HCT116 (cell line): ENCODE measurements at regions of chr17 and their contacts with region 1.

Region 1: GRCh38 chr17:8222630-8223356 is 12.4 kb upstream of the AURKB start:
- DNase-seq: peak; percentile 87
- ATAC-seq: peak; percentile 47
- H3K4me3 ChIP-seq: peak overlapping the region; percentile 82 to 86
- H3K27ac ChIP-seq: peak overlapping the region; percentile 83
- H3K4me1 ChIP-seq: peaks cover 51 to 94% of the 10 kb centered on the region in 2 experiments
- H3K27me3 ChIP-seq: no peaks in the 10 kb centered on the region
- CTCF ChIP-seq: no peak
- POLR2A ChIP-seq: peak; percentile 44
- RAD21 ChIP-seq: no peak

Region 2: DNA sequence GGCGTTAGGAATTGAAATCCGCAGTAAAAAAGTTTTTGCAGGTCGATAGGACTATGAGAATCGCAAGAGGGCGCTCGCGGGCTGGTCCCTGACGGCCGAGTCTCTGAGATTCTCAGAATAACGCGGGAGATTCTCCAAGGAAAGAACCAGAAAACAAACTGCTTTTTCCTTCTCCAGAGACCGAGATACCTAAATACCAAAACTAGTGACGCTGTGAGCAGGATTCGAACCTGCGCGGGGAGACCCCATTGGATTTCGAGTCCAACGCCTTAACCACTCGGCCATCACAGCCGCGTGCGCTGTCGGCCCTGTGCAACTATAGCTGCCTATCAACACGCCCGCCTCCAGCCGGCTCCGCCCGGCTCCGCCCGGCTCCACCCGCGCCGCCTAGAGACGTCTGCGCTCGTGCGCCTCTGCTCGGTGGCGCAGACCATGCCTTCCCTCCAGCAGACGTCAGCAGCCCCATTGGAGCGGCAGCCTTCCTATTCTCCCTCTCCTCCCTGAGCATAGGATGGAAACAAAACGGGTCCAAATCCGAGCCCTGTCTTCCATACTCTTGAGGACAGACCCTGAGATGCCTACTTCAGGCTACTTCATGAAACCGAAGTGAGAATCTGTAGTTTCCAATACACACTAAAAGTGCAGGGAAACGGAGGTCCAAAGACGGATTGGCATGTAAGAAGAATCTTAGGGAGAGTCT is 84.0 kb before region 1 on chr17:
- CTCF ChIA-PET with region 1: no interaction called
- POLR2A ChIA-PET with region 1: interaction called, 3 read pairs
- RAD21 ChIA-PET with region 1: interaction called in 1 of 2 experiments, 4 read pairs
- intact Hi-C with region 1: loop called (anchors 5 kb)
- DNase-seq: peak; percentile 95
- ATAC-seq: peak; percentile 89
- H3K4me3 ChIP-seq: peak overlapping the region; percentile 14 to 48; a peak in 3 of 4 replicates
- H3K27ac ChIP-seq: peak overlapping the region; percentile 63
- H3K4me1 ChIP-seq: peaks cover 30 to 61% of the 10 kb centered on the region in 2 experiments
- H3K27me3 ChIP-seq: no peaks in the 10 kb centered on the region
- CTCF ChIP-seq: peak; percentile 86 to 87 (median 87)
- POLR2A ChIP-seq: no peak
- RAD21 ChIP-seq: peak; percentile 88

Region 3: GRCh38 chr17:8189711-8190477 is 32.9 kb before region 1 on chr17 and contains the start of gene BORCS6:
- CTCF ChIA-PET with region 1: interaction called, 4 read pairs
- POLR2A ChIA-PET with region 1: interaction called, 63 read pairs
- RAD21 ChIA-PET with region 1: interaction called, 3 to 9 read pairs
- intact Hi-C with region 1: loop called (anchors 1 kb)
- DNase-seq: peak; percentile 96
- ATAC-seq: peak; percentile 64
- H3K4me3 ChIP-seq: peak within 1 kb of the TSS; percentile 75 to 83
- H3K27ac ChIP-seq: peak within 1 kb of the TSS; percentile 89
- H3K4me1 ChIP-seq: peaks cover 32 to 64% of the 10 kb centered on the region in 2 experiments
- H3K27me3 ChIP-seq: no peaks in the 10 kb centered on the region
- CTCF ChIP-seq: no peak
- POLR2A ChIP-seq: no peak
- RAD21 ChIP-seq: no peak
- total RNA-seq, gene BORCS6: 6.4 TPM

Region 4: DNA sequence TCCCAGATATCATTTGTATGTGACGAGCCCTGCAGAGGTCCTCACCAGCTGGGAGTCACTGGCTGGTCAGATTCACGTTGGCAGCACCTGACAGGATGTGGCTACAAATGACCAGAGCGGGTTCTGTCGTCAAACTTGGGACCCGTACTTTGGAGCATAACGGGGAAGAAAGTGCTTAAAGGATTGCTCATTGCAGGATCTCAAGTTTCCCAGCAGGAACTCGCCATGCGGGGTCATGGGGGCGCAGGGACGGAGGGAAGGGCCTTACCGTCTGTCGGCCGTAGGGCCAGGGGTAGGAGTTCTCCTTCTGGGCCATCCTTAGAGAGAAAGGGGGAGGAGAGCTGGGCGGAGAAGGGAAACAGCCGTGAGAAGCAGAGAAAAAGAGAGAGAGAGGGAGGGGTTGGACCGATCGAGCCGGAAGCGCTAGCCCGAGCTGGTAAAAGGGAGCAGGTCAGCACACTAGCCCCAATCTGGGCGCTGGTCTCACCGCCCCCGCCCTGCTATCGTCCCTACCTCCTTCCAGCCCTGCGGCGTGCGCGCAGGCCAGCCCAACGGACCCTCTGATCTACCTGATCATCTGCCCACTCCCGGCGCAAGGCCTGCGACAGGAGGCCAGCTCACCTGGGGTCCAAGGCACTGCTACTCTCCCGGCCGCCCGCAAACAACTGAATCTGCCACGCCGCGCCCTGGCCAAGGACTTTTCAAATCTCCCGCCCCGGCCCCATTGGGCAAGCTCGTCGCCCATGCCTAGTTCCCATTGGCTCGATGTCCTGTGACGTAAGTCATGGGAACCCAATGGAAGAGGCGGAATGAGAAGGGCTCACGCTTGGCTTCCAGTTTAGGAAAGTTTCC is 12.7 kb before region 1 on chr17 and contains the start of gene AURKB:
- CTCF ChIA-PET with region 1: no interaction called
- POLR2A ChIA-PET with region 1: interaction called, 57 read pairs
- RAD21 ChIA-PET with region 1: no interaction called
- intact Hi-C with region 1: no loop called
- DNase-seq: peak; percentile 92
- ATAC-seq: peak; percentile 77
- H3K4me3 ChIP-seq: peak within 1 kb of the TSS; percentile 78 to 95
- H3K27ac ChIP-seq: peak within 1 kb of the TSS; percentile 92
- H3K4me1 ChIP-seq: peaks cover 25 to 53% of the 10 kb centered on the region in 2 experiments; a peak in 3 of 4 replicates
- H3K27me3 ChIP-seq: no peaks in the 10 kb centered on the region
- CTCF ChIP-seq: no peak
- POLR2A ChIP-seq: peak; percentile 92
- RAD21 ChIP-seq: no peak
- total RNA-seq, gene AURKB: 141 TPM

Region 5: DNA sequence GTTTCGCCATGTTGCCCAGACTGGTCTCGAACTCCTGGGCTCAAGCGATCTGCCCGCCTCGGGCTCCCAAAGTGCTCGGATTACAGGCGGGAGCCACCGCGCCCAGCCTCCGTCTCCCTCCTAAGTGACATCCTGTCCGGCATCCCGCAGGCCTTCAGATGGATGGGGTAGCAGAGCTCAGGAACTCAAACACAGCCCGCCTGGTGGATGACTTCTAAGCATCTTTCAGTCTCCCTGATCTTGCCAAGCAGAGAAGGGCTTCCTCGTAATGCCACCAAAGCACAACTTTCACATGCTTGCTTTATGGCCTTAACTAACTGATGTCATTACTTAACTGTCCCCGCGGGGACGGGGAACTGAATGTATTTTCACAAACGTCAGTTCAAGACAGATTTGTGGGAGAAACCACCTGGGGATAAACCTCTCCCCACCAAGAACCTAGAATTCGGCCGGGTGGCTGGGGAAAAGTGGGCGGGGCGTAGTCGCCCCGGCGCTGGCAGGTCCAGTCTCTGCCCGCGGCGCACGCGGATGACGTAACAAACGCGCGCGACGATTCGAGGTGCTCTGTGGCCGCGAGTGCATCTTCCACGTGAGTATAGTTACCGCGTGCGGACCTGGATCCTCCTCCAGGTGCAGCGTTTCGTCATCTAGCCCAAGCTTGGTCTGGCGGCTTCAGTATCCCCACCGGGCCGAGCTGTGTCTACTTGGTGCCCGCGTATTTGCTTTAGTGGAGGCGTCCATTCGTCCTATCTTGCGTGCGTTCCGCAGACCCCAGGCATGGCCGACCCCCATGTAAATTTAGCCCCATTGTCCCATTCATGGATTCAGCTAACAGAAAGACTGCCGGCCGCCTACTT is 26.2 kb after region 1 on chr17 and contains the start of gene PFAS:
- CTCF ChIA-PET with region 1: interaction called, 4 read pairs
- POLR2A ChIA-PET with region 1: interaction called, 49 read pairs
- RAD21 ChIA-PET with region 1: interaction called, 3 to 5 read pairs
- intact Hi-C with region 1: loop called (anchors 2 kb)
- DNase-seq: peak; percentile 90
- ATAC-seq: peak; percentile 64
- H3K4me3 ChIP-seq: peak within 1 kb of the TSS; percentile 85 to 99
- H3K27ac ChIP-seq: peak within 1 kb of the TSS; percentile 98
- H3K4me1 ChIP-seq: peaks cover 14 to 26% of the 10 kb centered on the region in 2 experiments
- H3K27me3 ChIP-seq: no peaks in the 10 kb centered on the region
- CTCF ChIP-seq: no peak
- POLR2A ChIP-seq: peak; percentile 89
- RAD21 ChIP-seq: no peak
- total RNA-seq, gene PFAS: 80.6 TPM

Region 6: DNA sequence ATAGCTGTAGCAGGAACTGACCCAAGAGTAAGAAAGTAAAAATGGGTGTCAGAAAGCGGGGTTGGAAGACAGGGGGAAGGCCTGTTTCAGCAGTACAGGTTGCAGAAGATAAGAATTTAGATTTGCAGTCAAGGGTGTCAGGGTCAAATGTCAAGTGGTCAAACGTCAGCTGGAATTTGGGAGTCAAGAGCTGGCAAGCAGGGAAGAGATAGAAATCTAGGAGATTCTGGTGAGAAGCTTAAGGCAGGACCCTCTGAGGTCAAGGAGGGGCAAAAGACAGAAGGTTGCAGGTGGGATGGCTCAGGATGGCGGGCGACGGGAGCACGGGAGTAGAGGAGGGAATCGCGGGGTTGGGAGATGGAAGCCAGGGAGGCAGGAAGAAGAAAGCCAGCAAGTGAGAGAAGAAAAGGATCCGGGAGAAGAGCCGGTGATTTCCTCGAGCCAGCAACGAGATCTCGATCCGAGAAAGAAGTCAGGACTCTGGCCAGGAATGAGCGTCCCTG is 72.1 kb after region 1 on chr17:
- CTCF ChIA-PET with region 1: no interaction called
- POLR2A ChIA-PET with region 1: interaction called, 10 read pairs
- RAD21 ChIA-PET with region 1: no interaction called
- intact Hi-C with region 1: no loop called
- DNase-seq: no peak
- ATAC-seq: peak; percentile 24
- H3K4me3 ChIP-seq: peak overlapping the region; percentile 54 to 65
- H3K27ac ChIP-seq: peak overlapping the region; percentile 93
- H3K4me1 ChIP-seq: peaks cover 19 to 34% of the 10 kb centered on the region in 2 experiments
- H3K27me3 ChIP-seq: no peaks in the 10 kb centered on the region
- CTCF ChIP-seq: no peak
- POLR2A ChIP-seq: no peak
- RAD21 ChIP-seq: no peak

Region 7: DNA sequence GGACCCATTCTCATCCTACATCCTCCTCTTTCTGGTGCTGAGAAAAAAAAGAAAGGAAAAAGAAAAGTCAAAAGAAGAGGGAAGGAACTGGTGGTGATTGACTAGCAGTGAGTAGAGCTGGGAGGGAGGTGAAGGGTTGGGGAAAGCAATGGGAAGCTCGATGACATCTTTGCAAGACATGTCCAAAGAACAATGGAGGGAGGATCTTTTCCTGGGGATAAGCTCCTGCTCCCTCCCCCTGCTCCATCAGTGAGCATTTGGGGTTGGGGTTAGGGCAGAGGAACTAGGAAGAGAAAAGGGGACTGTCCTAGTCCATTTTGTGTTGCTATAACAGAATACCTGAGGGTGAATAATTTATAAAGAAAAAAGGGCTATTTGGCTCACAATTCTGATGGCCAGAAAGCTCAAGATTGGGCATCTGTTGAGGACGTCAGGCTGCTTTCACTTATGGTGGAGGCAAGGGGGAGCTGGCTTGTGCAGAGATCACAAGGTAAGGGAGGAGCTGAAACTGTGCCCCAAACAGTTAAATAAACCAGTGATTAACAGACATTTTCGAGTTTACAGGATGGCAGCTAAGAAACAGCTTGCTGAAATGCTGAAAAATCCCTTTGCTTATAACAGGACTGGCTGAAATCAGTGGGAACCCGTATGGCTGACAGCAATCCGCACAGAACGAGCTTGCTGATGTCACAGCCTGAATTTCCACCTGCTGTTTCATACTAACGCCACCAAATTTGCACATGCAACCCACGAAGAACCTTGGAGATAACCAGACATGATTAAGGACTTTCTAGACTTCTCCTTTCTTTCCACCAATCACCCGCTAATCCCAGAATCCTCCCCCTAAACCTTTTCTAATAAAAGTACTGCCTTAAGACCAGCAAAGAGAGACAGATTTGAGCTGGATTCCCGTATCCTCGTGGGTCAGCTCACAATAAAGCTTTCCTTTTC is 115.3 kb after region 1 on chr17:
- CTCF ChIA-PET with region 1: no interaction called
- POLR2A ChIA-PET with region 1: no interaction called
- RAD21 ChIA-PET with region 1: no interaction called
- intact Hi-C with region 1: no loop called
- DNase-seq: no peak
- ATAC-seq: no peak
- H3K4me3 ChIP-seq: no peak overlapping the region
- H3K27ac ChIP-seq: no peak overlapping the region
- H3K4me1 ChIP-seq: no peaks in the 10 kb centered on the region
- H3K27me3 ChIP-seq: no peaks in the 10 kb centered on the region
- CTCF ChIP-seq: no peak
- POLR2A ChIP-seq: no peak
- RAD21 ChIP-seq: no peak

Region 8: GRCh38 chr17:8376271-8377067 is 153.7 kb after region 1 on chr17 and contains the start of gene KRABD2:
- CTCF ChIA-PET with region 1: no interaction called
- POLR2A ChIA-PET with region 1: no interaction called
- RAD21 ChIA-PET with region 1: no interaction called
- intact Hi-C with region 1: loop called (anchors 10 kb)
- DNase-seq: peak; percentile 76
- ATAC-seq: peak; percentile 94
- H3K4me3 ChIP-seq: peak within 1 kb of the TSS; percentile 65 to 72
- H3K27ac ChIP-seq: peak within 1 kb of the TSS; percentile 80
- H3K4me1 ChIP-seq: peaks cover 24 to 46% of the 10 kb centered on the region in 2 experiments; a peak in 3 of 4 replicates
- H3K27me3 ChIP-seq: no peaks in the 10 kb centered on the region
- CTCF ChIP-seq: peak in 2 of 3 experiments; percentile 60 to 68; a peak in 4 of 6 replicates
- POLR2A ChIP-seq: peak; percentile 50
- RAD21 ChIP-seq: 0 out of 2 replicates have a peak, but pooled peaks have one; percentile 13

Region 9: DNA sequence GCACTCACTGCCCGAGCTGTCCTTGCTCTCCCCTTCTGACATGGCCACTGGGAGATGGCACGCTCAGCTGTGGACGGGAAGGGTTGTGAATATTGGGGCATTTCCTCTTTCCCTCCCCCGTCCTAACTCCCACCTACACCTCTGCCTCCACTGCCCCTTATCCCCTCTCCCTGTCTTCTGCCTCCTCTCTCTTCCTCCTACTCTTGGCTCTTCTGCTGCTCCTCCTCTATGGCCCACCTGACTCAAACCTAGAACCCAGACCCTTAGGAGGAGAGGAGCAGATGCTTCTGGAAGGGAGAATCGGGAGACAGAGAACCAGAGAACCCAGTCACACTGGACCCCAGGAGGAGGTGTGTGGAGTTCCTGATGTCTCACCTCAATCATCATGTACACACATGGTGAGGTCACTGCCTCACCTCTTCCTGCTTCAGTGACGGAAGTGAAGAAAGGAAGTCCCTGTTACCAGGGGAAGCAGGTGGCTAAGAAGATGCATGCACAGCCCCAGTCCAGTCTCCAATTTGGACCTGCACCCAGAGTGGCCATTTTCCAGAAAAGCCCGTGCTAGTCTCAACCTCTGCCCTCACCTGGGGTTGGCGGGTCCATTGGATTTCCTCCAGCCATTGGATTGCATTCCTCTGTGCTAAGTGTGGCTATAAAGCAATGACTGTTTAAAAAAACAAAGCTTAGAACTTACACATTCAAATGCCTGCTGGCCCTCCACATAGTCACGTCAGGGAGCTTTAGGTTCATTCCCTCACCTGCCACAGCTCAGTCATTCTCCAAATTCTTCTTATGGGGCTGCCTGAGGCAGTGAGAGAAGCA is 170.8 kb after region 1 on chr17:
- CTCF ChIA-PET with region 1: no interaction called
- POLR2A ChIA-PET with region 1: no interaction called
- RAD21 ChIA-PET with region 1: no interaction called
- intact Hi-C with region 1: no loop called
- DNase-seq: no peak
- ATAC-seq: peak; percentile 21; the same call in 1 of the 2 replicates
- H3K4me3 ChIP-seq: no peak overlapping the region
- H3K27ac ChIP-seq: no peak overlapping the region
- H3K4me1 ChIP-seq: peaks cover 0 to 27% of the 10 kb centered on the region in 2 experiments; a peak in 2 of 4 replicates
- H3K27me3 ChIP-seq: no peaks in the 10 kb centered on the region
- CTCF ChIP-seq: no peak
- POLR2A ChIP-seq: no peak
- RAD21 ChIP-seq: no peak